ENCODE measurements at regions of chr5 and their contacts with region 1.

Region 1: DNA sequence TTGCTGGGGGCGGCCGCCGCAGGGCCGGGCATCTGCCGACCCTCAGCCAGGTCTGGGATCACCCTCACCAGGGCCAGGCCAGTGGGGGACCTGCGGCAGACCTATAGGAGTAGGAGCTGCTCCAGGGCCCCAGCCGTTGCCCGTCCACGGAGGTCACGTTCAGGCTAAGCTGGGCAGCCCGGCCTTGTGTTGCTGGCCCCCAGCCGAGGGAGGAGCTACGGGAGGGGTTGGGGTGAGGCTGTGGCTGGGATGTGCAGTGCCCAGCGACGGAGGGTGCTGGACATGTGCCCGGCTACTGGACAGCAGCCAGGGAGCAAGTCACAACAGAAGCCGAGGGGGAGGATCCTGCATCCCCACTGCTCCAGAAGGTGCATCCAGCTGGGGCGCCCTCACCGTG is 39.6 kb upstream of the SLC6A19 start:
- DNase-seq: peak in 1 of 2 experiments; percentile 97
- H3K4me3 ChIP-seq: no peak overlapping the region
- H3K27ac ChIP-seq: no peak overlapping the region
- H3K4me1 ChIP-seq: peaks cover 12% of the 10 kb centered on the region
- H3K27me3 ChIP-seq: peaks cover 5% of the 10 kb centered on the region; the same call in 1 of the 2 replicates
- CTCF ChIP-seq: no peak

Region 2: DNA sequence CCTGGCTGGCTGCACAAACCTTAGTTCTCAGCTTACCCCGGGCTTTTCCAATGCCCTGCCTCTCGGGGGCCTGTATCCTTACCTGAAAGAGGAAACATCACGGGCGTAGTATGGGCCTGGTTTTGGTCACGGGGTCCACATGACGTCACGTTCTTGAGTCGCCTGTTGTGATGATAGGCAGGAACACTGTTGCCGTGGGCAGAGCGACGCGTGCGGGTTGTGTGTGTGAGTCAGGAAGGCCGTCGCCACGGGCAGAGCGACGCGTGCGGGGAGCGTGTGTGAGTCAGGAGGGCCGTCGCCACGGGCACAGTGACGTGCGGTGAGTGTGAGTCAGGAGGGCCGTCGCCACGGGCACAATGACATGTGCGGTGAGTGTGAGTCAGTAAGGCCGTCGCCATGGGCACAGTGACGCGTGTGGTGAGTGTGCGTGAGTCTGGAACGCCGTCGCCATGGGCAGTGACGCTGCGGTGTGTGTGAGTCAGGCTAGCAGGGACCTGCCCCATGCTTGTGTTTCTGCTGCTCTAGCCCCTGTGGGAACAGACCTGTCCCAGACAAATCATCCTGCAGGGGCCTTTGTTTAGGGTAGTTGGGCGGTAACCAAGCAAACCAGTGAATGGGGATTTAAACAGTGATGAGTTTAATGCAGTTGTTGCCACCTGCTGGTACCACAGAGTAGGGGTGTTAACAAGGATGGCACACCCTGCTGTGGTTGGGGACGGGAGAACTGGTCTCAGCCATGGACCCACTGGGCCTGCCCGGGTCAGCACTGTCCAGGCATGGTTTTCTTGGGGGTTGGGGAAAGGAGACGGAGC is 249.3 kb before region 1 on chr5:
- CTCF ChIA-PET with region 1: no interaction called
- POLR2A ChIA-PET with region 1: no interaction called
- intact Hi-C with region 1: loop called (anchors 2 kb)
- DNase-seq: peak; percentile 95 to 99
- H3K4me3 ChIP-seq: peak overlapping the region; percentile 30; the same call in 1 of the 2 replicates
- H3K27ac ChIP-seq: peak overlapping the region; percentile 79
- H3K4me1 ChIP-seq: peaks cover 14% of the 10 kb centered on the region
- H3K27me3 ChIP-seq: no peaks in the 10 kb centered on the region
- CTCF ChIP-seq: peak; percentile 70

Region 3: DNA sequence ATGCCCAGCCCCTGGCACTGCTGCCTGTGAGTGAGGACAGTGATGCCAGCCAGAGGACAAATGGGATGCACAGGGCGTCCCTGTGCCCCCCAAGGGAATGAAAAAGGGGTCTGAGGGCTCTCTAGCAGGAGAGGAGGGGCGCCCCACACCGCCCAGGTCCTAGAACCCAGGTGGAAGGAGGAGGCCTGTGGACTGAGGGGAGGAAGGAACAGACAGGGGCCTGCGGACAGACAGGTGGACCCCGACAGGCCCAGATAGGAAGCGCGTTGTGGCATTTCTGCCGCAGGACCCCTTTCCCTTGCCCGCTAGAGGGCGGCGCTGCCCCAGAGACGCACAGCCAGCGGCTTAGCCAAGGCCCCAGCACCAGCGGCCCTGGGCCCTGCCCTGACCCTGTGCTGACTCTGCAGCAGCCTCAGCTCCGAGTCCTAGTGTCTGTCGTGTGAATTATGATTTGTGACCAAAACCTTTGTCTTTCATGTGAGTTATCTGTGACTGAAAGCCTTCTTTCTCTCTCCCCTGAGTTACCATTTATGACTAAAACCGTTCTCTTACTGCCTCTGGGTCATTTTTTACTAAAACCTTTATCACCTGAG is 238.5 kb before region 1 on chr5:
- CTCF ChIA-PET with region 1: interaction called, 18 read pairs
- POLR2A ChIA-PET with region 1: no interaction called
- intact Hi-C with region 1: loop called (anchors 1 kb)
- DNase-seq: peak; percentile 60 to 95
- H3K4me3 ChIP-seq: no peak overlapping the region
- H3K27ac ChIP-seq: no peak overlapping the region
- H3K4me1 ChIP-seq: no peaks in the 10 kb centered on the region
- H3K27me3 ChIP-seq: no peaks in the 10 kb centered on the region
- CTCF ChIP-seq: peak; percentile 96

Region 4: GRCh38 chr5:1011226-1011631 is 150.6 kb before region 1 on chr5:
- CTCF ChIA-PET with region 1: no interaction called
- POLR2A ChIA-PET with region 1: interaction called, 3 read pairs
- intact Hi-C with region 1: loop called (anchors 2 kb)
- DNase-seq: peak in 1 of 2 experiments; percentile 87
- H3K4me3 ChIP-seq: no peak overlapping the region
- H3K27ac ChIP-seq: no peak overlapping the region
- H3K4me1 ChIP-seq: no peaks in the 10 kb centered on the region
- H3K27me3 ChIP-seq: peaks cover 87% of the 10 kb centered on the region
- CTCF ChIP-seq: peak; percentile 88

Region 5: GRCh38 chr5:1111727-1112289 is 50.0 kb before region 1 on chr5 and contains the start of gene SLC12A7:
- CTCF ChIA-PET with region 1: no interaction called
- POLR2A ChIA-PET with region 1: no interaction called
- intact Hi-C with region 1: loop called (anchors 1 kb)
- DNase-seq: peak; percentile 61 to 92
- H3K4me3 ChIP-seq: peak within 1 kb of the TSS; percentile 84
- H3K27ac ChIP-seq: peak within 1 kb of the TSS; percentile 62
- H3K4me1 ChIP-seq: peaks cover 32% of the 10 kb centered on the region
- H3K27me3 ChIP-seq: no peaks in the 10 kb centered on the region
- CTCF ChIP-seq: no peak
- total RNA-seq, gene SLC12A7: 174 and 207 TPM in 2 replicates

Region 6: GRCh38 chr5:1130218-1130946 is 31.4 kb before region 1 on chr5:
- CTCF ChIA-PET with region 1: interaction called, 11 read pairs
- POLR2A ChIA-PET with region 1: interaction called, 10 read pairs
- intact Hi-C with region 1: loop called (anchors 1 kb)
- DNase-seq: peak; percentile 97 to 99
- H3K4me3 ChIP-seq: peak overlapping the region; percentile 45; the same call in 1 of the 2 replicates
- H3K27ac ChIP-seq: peak overlapping the region; percentile 82
- H3K4me1 ChIP-seq: peaks cover 57% of the 10 kb centered on the region
- H3K27me3 ChIP-seq: no peaks in the 10 kb centered on the region
- CTCF ChIP-seq: peak; percentile 27; the same call in 1 of the 2 replicates

Region 7: DNA sequence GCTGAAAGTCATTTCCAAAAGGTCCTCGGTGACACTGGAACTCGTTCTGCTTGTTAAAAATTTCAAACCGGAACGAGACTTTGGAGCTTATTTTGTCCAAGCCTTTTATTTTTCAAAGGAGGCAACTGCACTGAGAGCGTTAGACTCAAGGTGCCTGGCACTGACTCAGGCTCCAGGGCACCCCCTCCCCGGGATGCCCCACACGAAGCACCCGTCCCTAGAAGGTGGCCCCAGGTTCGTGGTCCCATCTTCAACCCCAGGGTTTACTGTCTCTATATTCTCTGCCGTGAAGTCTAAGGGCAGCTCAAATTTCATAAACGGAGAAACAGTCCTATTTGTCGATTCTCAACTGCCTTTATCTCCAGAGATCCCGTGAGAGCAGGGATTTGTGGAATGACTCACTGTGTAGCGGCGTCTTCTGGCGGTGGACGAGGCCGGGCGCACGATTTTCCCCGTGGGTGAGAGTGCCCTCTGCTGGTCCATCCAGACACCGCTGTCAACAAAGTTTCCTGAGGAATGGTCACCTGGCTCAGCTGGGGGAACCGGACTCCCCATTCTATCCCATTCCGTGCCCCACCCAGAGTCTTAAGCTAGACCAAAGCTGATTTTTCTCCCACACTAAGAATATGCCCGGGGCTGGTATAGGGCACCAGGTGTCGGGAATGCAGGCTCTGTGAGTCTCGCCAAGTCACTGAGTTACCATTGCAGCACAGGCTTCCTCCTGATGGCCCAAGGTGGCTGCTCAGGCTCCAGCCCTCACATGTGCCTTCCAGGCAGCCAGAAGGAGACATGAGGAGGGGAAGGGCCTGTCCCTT is 12.5 kb after region 1 on chr5:
- CTCF ChIA-PET with region 1: interaction called, 10 read pairs
- POLR2A ChIA-PET with region 1: no interaction called
- intact Hi-C with region 1: no loop called
- DNase-seq: peak; percentile 77 to 88
- H3K4me3 ChIP-seq: no peak overlapping the region
- H3K27ac ChIP-seq: no peak overlapping the region
- H3K4me1 ChIP-seq: no peaks in the 10 kb centered on the region
- H3K27me3 ChIP-seq: peaks cover 89% of the 10 kb centered on the region
- CTCF ChIP-seq: peak; percentile 95

Region 8: GRCh38 chr5:1315709-1316587 is 154.1 kb after region 1 on chr5:
- CTCF ChIA-PET with region 1: no interaction called
- POLR2A ChIA-PET with region 1: no interaction called
- intact Hi-C with region 1: no loop called
- DNase-seq: peak; percentile 95 to 97
- H3K4me3 ChIP-seq: peak overlapping the region; percentile 24; the same call in 1 of the 2 replicates
- H3K27ac ChIP-seq: peak overlapping the region; percentile 27
- H3K4me1 ChIP-seq: peaks cover 40% of the 10 kb centered on the region
- H3K27me3 ChIP-seq: peaks cover 2% of the 10 kb centered on the region; the same call in 1 of the 2 replicates
- CTCF ChIP-seq: no peak